ENCODE measurements at regions of chr1 and their contacts with region 1.

Region 1: DNA sequence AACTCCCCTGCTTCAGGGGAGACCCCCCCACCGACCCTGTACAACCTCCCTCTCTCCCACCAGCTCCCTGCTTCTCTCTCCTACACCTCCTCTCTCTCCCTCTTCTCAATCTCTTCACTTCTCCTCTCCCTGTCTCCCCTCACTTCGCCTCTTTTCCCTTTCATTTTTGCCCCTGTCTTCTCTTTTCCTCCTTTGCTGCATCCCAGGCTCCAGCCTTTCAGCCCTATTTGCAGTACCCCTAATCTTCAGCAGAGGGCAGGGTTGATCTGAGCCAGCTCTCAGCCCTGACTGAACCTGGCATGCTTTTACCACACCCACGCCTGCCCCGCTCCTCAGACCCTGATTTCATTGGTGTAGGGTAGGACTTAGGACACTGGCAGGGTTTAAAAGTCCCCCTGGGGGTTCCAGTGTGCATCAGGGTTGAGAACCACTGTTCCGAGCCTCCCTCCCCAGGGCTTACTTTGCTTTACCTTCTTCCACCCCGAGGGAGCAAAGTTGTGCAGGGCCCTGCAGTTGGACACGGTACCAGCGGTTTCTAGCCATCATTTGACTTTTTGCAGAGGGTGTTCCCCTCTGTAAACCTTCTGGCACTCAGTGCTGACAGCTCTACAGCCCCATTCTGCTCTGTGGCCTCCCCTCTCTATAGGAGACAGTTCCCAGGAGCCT is 67.3 kb upstream of the CNTN2 start:
- DNase-seq: peak in 2 of 4 donors; percentile 22 to 44
- ATAC-seq: peak; percentile 88
- H3K4me3 ChIP-seq: no peak overlapping the region
- H3K27ac ChIP-seq: no peak overlapping the region
- H3K4me1 ChIP-seq: peaks cover 0 to 25% of the 10 kb centered on the region in 2 donors
- H3K27me3 ChIP-seq: peaks cover 0 to 16% of the 10 kb centered on the region in 2 donors
- CTCF ChIP-seq: peak; percentile 82 to 89

Region 2: GRCh38 chr1:205255941-205256780 is 280.5 kb after region 1 on chr1:
- intact Hi-C with region 1: loop called in 1 of 2 experiments (anchors 10 kb)
- DNase-seq: peak; percentile 84 to 93 (median 90)
- ATAC-seq: peak; percentile 97
- H3K4me3 ChIP-seq: no peak overlapping the region
- H3K27ac ChIP-seq: no peak overlapping the region
- H3K4me1 ChIP-seq: peaks cover 9 to 32% of the 10 kb centered on the region in 2 donors
- H3K27me3 ChIP-seq: no peaks in the 10 kb centered on the region
- CTCF ChIP-seq: peak; percentile 92 to 94